ENCODE measurements at regions of chr7 and their contacts with region 1.

Region 1: GRCh38 chr7:123494193-123494796 is 40.1 kb downstream of the IQUB start:
- DNase-seq: peak; percentile 48
- ATAC-seq: no peak
- H3K4me3 Mint-ChIP-seq: no peak overlapping the region
- H3K27ac Mint-ChIP-seq: no peak overlapping the region
- H3K4me1 Mint-ChIP-seq: no peaks in the 10 kb centered on the region
- H3K27me3 Mint-ChIP-seq: peaks cover 10% of the 10 kb centered on the region
- CTCF ChIP-seq: peak; percentile 77

Region 2: GRCh38 chr7:123534383-123535260 is 40.3 kb after region 1 on chr7 and contains the start of gene IQUB:
- CTCF ChIA-PET with region 1: interaction called, 11 read pairs
- POLR2A ChIA-PET with region 1: no interaction called
- intact Hi-C with region 1: loop called (anchors 5 kb)
- DNase-seq: peak; percentile 98
- ATAC-seq: peak; percentile 90
- H3K4me3 Mint-ChIP-seq: peak within 1 kb of the TSS; percentile 86
- H3K27ac Mint-ChIP-seq: peak within 1 kb of the TSS; percentile 83
- H3K4me1 Mint-ChIP-seq: peaks cover 31% of the 10 kb centered on the region
- H3K27me3 Mint-ChIP-seq: peaks cover 18% of the 10 kb centered on the region
- CTCF ChIP-seq: no peak
- total RNA-seq, gene IQUB: 0.09 TPM in 1 of 2 experiments, not detected in the other

Region 3: DNA sequence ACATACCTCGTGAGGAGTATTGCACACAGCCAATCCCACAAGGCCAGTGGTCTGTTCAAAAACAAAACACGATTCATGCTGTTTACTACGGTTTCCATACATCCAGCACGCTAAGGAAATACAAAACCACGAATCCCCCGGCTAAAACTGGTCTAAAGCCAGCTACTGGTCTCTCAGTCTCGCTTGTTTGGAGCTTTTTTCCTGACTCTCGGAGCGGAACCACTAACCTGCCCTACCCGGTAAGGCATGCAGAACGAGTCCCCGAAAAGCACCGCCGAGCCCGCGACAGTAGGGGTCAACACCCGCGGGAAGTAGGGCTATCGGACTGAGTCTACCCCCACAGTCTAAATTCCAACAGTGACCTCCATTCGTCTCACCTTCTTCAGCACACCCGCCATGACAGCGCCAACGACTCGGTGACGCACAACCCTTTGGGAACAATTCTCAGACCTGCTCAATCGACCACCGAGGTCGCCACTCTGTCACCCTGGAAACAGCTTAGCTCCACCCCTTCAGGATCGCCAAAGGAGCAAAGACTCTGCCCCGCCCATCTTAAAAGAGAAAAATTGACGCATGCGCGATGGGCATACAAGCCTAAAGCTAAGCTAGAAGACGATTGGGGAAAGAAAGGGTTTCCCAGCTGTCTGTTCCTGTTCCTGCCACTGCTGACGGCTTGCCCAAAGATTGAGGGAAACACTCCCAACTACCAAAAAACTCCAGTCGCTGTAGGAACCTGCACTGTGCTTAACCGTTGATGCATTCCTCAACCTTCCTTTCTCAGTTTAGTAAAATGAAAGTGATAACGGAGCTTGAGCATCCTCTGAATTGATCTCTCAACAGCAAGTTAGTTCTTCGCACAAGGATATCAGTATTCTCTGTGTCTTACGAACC is 63.3 kb after region 1 on chr7 and contains the start of gene NDUFA5:
- CTCF ChIA-PET with region 1: interaction called, 11 read pairs
- POLR2A ChIA-PET with region 1: interaction called, 3 read pairs
- intact Hi-C with region 1: no loop called
- DNase-seq: peak; percentile 98
- ATAC-seq: peak; percentile 98
- H3K4me3 Mint-ChIP-seq: no peak within 1 kb of the TSS
- H3K27ac Mint-ChIP-seq: no peak within 1 kb of the TSS
- H3K4me1 Mint-ChIP-seq: peaks cover 16% of the 10 kb centered on the region
- H3K27me3 Mint-ChIP-seq: no peaks in the 10 kb centered on the region
- CTCF ChIP-seq: no peak
- total RNA-seq, gene NDUFA5: 62.8 to 63.7 TPM

Region 4: GRCh38 chr7:123624527-123625183 is 130.4 kb after region 1 on chr7:
- CTCF ChIA-PET with region 1: interaction called, 10 read pairs
- POLR2A ChIA-PET with region 1: no interaction called
- intact Hi-C with region 1: no loop called
- DNase-seq: peak; percentile 87
- ATAC-seq: peak; percentile 86
- H3K4me3 Mint-ChIP-seq: no peak overlapping the region
- H3K27ac Mint-ChIP-seq: no peak overlapping the region
- H3K4me1 Mint-ChIP-seq: peaks cover 2% of the 10 kb centered on the region
- H3K27me3 Mint-ChIP-seq: peaks cover 9% of the 10 kb centered on the region
- CTCF ChIP-seq: peak; percentile 66

Region 5: DNA sequence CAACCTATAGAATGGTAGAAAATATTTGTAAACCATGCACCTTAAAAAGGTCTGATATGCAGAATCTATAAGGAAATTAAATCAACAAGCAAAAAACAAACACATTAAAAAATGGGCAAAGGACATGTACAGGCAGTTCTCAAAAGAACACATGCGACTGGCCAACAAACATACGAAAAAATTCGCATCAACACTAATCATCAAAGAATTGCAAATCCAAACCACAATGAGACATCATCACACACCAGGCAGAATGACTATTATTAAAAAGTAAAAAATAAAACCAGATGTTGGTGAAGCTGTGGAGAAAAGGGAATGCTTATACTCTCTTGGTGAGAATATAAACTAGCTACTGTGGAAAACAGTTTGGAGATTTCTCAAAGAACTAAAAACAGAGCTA is 505.4 kb after region 1 on chr7:
- CTCF ChIA-PET with region 1: no interaction called
- POLR2A ChIA-PET with region 1: no interaction called
- intact Hi-C with region 1: no loop called
- DNase-seq: no peak
- ATAC-seq: no peak
- H3K4me3 Mint-ChIP-seq: no peak overlapping the region
- H3K27ac Mint-ChIP-seq: no peak overlapping the region
- H3K4me1 Mint-ChIP-seq: no peaks in the 10 kb centered on the region
- H3K27me3 Mint-ChIP-seq: no peaks in the 10 kb centered on the region
- CTCF ChIP-seq: no peak